ENCODE measurements at regions of chr10 and their contacts with region 1.

Region 1: DNA sequence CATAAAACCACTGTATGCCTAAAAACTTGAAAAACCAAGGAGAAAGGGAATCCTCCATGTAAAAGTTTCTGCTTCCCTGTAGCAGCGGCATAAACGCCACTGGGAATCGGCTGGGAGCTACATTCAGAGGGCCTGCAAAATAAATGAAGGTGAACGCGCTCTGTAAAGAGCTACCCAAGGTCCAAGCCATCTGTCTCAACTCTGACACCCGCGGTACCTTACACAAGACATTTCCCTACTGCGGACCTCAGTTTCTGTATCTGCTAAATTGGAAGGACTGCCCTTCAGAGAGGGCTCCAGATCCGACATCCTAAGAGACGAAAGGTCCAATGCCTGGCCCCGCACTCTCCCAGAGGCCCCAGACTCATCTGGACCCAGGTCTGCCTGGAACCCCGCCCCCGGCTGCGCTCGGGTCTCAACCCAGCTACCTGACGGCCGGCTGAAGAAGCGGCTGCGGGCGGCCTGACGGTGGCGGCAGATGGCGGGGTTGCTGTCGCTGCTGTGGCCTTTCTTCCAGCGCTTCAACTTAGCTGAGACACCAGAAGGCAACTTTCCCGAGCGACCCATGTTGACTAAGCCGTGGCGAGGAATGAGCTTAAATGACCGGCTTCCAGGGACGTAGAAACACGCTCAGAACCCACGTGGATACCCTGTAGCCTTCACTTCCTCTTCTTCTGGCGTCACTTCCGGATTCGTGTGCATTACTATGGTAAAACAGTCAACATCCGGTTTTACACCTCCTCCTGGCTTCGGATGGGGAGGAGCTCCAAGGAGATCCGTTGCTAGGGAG is at the start of gene RRP12:
- DNase-seq: peak; percentile 87
- H3K4me3 Mint-ChIP-seq: peak within 1 kb of the TSS; percentile 97
- H3K27ac Mint-ChIP-seq: peak within 1 kb of the TSS; percentile 89
- H3K4me1 Mint-ChIP-seq: peaks cover 11% of the 10 kb centered on the region
- H3K27me3 Mint-ChIP-seq: no peaks in the 10 kb centered on the region
- total RNA-seq, gene RRP12: 69.8 and 70.1 TPM in 2 replicates

Region 2: DNA sequence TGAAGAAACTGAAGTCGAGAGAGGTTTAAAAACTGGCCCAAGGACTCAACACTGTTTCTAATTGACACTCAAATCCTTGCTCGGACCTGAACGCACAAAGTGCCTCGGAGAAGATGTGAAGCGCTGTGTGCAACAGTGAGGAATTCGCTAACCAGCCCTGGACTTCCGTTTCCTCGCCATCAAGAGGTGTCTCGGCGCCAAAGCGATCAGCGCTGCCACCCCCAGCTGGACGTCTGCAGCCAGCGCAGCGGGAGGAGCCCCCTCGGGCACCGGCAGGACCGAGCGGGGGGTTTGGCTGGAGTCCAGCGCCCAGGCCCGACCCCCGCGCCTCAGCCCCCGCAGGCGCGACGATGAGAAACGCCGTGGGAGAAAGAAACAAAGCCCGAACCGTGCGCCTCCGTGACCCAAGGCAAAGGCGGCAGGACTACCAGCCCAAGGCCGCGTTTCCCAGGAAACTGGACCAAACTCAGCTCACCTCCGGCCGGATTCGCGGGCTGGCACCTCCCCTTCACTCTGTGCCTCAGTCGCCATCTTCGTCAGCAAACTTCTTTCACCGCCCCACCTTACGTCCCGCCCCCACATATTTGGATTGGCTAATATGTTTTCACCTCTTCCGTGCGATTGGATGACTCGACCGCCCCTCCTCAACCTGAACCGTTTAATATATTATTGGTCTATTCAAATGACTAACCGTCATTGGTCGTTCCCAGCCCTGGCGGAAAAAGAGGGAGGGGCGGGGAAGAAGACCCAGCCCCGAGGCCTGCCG is 108.6 kb before region 1 on chr10 and contains the start of gene ARHGAP19:
- intact Hi-C with region 1: loop called (anchors 5 kb)
- DNase-seq: peak; percentile 93
- H3K4me3 Mint-ChIP-seq: peak within 1 kb of the TSS; percentile 94
- H3K27ac Mint-ChIP-seq: peak within 1 kb of the TSS; percentile 83
- H3K4me1 Mint-ChIP-seq: peaks cover 24% of the 10 kb centered on the region
- H3K27me3 Mint-ChIP-seq: no peaks in the 10 kb centered on the region
- total RNA-seq, gene ARHGAP19: 25.3 and 29.9 TPM in 2 replicates

Region 3: GRCh38 chr10:97327348-97328294 is 73.2 kb before region 1 on chr10:
- intact Hi-C with region 1: loop called (anchors 5 kb)
- DNase-seq: no peak
- H3K4me3 Mint-ChIP-seq: no peak overlapping the region
- H3K27ac Mint-ChIP-seq: peak overlapping the region; percentile 81
- H3K4me1 Mint-ChIP-seq: peaks cover 45% of the 10 kb centered on the region
- H3K27me3 Mint-ChIP-seq: no peaks in the 10 kb centered on the region

Region 4: GRCh38 chr10:97347317-97347716 is 53.5 kb before region 1 on chr10:
- intact Hi-C with region 1: no loop called
- DNase-seq: no peak
- H3K4me3 Mint-ChIP-seq: no peak overlapping the region
- H3K27ac Mint-ChIP-seq: no peak overlapping the region
- H3K4me1 Mint-ChIP-seq: no peaks in the 10 kb centered on the region
- H3K27me3 Mint-ChIP-seq: peaks cover 2% of the 10 kb centered on the region

Region 5: GRCh38 chr10:97388152-97388551 is 12.7 kb before region 1 on chr10:
- intact Hi-C with region 1: no loop called
- DNase-seq: no peak
- H3K4me3 Mint-ChIP-seq: no peak overlapping the region
- H3K27ac Mint-ChIP-seq: no peak overlapping the region
- H3K4me1 Mint-ChIP-seq: no peaks in the 10 kb centered on the region
- H3K27me3 Mint-ChIP-seq: no peaks in the 10 kb centered on the region

Region 6: DNA sequence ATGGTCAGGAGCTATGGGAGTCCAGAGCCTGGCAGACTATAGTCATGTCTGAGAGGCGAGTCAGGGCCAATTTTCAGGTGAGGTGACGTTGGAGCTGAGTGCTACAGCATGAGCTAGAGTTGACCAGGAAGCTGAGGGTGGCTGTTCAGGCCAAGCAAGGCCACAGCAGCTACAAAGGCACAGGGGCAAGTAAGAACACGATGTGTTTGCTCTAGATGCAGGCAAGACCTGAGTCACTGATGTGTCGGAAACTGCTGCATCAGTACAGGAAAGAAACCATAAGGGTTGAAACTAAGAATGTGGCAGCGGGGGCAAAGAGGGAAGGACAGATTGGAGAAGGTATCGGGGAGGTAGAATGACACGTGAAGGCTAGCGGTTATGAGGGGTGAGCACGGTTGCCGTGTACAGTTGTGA is 12.0 kb after region 1 on chr10:
- intact Hi-C with region 1: loop called (anchors 1 kb)
- DNase-seq: peak; percentile 43
- H3K4me3 Mint-ChIP-seq: peak overlapping the region; percentile 53
- H3K27ac Mint-ChIP-seq: peak overlapping the region; percentile 91
- H3K4me1 Mint-ChIP-seq: peaks cover 48% of the 10 kb centered on the region
- H3K27me3 Mint-ChIP-seq: no peaks in the 10 kb centered on the region

Region 7: GRCh38 chr10:97445722-97446639 is 45.1 kb after region 1 on chr10 and contains the starts of genes EXOSC1 and ZDHHC16:
- intact Hi-C with region 1: loop called (anchors 1 kb)
- DNase-seq: peak; percentile 92
- H3K4me3 Mint-ChIP-seq: peak within 1 kb of the TSS; percentile 95
- H3K27ac Mint-ChIP-seq: peak within 1 kb of the TSS; percentile 69
- H3K4me1 Mint-ChIP-seq: peaks cover 34% of the 10 kb centered on the region
- H3K27me3 Mint-ChIP-seq: no peaks in the 10 kb centered on the region
- total RNA-seq, gene EXOSC1: 49.9 and 53.4 TPM in 2 replicates
- total RNA-seq, gene ZDHHC16: 41.4 and 52.9 TPM in 2 replicates